ENCODE measurements at regions of chr10 and their contacts with region 1.

Region 1: GRCh38 chr10:118754720-118755480 is at the start of gene CACUL1:
- DNase-seq: peak; percentile 95 to 97 (median 96)
- ATAC-seq: peak; percentile 94
- H3K4me3 ChIP-seq: peak within 1 kb of the TSS; percentile 97
- H3K27ac ChIP-seq: peak within 1 kb of the TSS; percentile 85
- H3K4me1 ChIP-seq: peaks cover 0 to 11% of the 10 kb centered on the region in 2 experiments; a peak in 3 of 5 replicates
- H3K27me3 ChIP-seq: no peaks in the 10 kb centered on the region
- CTCF ChIP-seq: no peak
- EP300 ChIP-seq: no peak
- POLR2A ChIP-seq: peak; percentile 75
- RAD21 ChIP-seq: no peak
- polyA plus RNA-seq, gene CACUL1: 4.5 to 10.1 TPM

Region 2: DNA sequence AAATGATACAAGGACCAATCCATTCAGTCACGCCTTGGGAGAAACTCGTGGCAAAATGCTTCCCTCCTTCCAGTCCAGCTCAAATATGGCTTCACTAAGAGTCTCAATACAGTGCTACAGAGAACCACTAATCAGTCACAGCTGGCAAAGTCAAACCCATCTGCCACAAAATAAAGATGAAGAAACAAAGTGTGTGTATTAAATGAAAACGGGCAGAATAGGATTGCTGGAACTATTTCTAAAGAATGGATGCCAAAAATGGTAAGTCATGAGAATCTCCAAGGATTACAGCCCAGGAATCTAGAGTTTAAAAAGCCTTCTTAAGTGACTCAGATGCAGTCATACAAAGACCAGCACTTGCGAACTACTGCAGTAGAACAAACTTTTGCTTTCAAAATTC is 62.0 kb before region 1 on chr10:
- CTCF ChIA-PET with region 1: no interaction called
- POLR2A ChIA-PET with region 1: no interaction called
- in situ Hi-C with region 1: no loop called
- intact Hi-C with region 1: no loop called
- DNase-seq: no peak
- ATAC-seq: no peak
- H3K4me3 ChIP-seq: no peak overlapping the region
- H3K27ac ChIP-seq: no peak overlapping the region
- H3K4me1 ChIP-seq: no peaks in the 10 kb centered on the region
- H3K27me3 ChIP-seq: no peaks in the 10 kb centered on the region
- CTCF ChIP-seq: no peak
- EP300 ChIP-seq: no peak
- POLR2A ChIP-seq: no peak
- RAD21 ChIP-seq: no peak

Region 3: DNA sequence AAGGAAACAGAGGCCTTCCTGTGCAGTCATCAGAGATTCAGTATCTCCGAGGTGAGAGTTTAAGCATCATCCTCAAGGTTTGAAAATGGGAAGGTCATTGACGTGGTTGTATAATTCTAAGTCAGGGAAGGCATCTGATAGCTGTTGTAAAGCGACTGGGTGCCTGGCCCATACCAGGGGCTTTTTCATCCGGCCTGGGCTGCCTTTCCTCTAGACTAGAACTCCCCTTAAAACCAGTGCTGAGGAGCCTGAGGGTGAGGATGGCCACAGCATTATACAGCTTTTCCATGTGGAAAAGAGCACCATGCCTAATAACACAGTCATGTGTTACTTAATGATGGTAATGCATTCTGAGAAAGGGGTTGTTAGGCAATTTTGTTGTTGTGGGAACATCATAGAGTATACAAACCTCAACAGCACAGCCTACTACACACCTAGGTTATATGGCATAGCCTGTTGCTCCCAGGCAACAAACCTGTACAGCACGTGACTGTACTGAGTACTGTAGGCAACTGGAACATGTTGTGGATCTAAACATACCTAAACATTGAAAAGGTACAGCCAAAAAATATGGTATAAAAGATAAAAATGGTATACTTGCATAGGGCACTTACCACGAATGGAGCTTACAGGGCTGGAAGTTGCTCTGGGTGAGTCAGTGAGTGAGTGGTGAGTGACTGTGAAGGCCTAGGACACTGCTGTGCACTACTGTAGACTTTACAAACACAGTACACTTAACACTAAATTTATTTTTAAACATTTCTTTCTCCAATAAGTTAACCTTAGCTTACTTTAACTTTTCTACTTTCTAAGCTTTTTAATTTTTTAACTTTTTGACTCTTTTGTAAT is 13.4 kb after region 1 on chr10:
- CTCF ChIA-PET with region 1: no interaction called
- POLR2A ChIA-PET with region 1: interaction called, 15 read pairs
- in situ Hi-C with region 1: no loop called
- intact Hi-C with region 1: no loop called
- DNase-seq: peak in 1 of 4 experiments; percentile 28
- ATAC-seq: peak; percentile 71
- H3K4me3 ChIP-seq: no peak overlapping the region
- H3K27ac ChIP-seq: peak overlapping the region; percentile 84; the same call in 2 of the 3 replicates
- H3K4me1 ChIP-seq: peaks cover 0 to 18% of the 10 kb centered on the region in 2 experiments; a peak in 4 of 5 replicates
- H3K27me3 ChIP-seq: no peaks in the 10 kb centered on the region
- CTCF ChIP-seq: no peak
- EP300 ChIP-seq: no peak
- POLR2A ChIP-seq: no peak
- RAD21 ChIP-seq: no peak

Region 4: GRCh38 chr10:118958984-118959916 is 204.3 kb after region 1 on chr10:
- CTCF ChIA-PET with region 1: no interaction called
- POLR2A ChIA-PET with region 1: no interaction called
- in situ Hi-C with region 1: no loop called
- intact Hi-C with region 1: no loop called
- DNase-seq: peak; percentile 12 to 29 (median 20)
- ATAC-seq: 0 out of 3 replicates have a peak, but pooled peaks have one; percentile 44
- H3K4me3 ChIP-seq: no peak overlapping the region
- H3K27ac ChIP-seq: no peak overlapping the region
- H3K4me1 ChIP-seq: no peaks in the 10 kb centered on the region; a peak in 1 of 5 replicates
- H3K27me3 ChIP-seq: peaks cover 0 to 42% of the 10 kb centered on the region in 2 experiments; a peak in 2 of 5 replicates
- CTCF ChIP-seq: no peak
- EP300 ChIP-seq: no peak
- POLR2A ChIP-seq: no peak
- RAD21 ChIP-seq: no peak